Heart right ventricle (tissue), 16 donors: ENCODE measurements at regions of chr1 and their contacts with region 1.

Region 1: DNA sequence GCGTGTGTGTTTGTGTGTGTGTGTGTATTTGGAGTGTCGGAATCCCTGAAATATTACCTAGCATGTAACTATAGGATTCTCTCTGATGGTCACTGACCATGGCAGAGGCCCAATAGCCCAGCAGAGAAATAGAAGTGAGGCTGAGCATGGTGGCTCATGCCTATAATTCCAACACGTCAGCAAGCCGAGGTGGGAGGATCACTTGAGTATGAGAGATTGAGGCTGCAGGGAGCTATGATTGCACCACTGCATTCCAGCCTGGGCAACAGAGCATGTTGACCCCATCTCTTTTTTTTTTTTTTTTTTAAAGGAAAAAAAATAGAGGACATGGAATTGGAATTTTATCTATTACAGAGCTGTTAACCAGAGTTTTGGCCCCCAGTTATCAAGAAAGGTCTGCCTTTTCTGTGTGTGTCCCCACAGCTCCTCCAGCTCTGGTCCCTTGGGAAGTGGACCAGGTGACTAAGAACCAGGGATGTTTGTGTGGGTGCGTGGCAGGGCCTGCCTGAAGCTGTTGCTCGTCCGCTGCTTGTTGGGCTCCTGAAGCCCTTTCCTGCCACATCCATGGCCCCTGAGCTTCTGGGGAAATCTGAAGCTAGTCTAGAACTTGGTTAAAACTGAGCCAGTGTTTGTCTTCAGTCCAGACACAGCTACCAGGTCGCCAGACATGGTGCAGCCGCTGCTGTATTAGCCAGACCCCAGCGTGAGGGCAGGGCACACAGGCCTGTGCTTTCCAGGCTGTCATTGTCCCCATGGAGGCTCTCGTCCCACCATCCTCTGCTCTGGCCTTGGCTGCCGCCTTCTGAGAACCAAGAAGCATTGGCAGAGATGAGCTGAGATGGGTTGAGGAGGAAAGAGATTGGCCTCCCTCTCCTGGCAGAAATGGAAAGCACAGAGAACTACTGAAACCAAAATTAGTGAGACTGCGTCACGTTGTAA is 25.5 kb downstream of the CAPN9 start:
- DNase-seq: peak; percentile 52 to 76
- ATAC-seq: peak; percentile 81 to 91 (median 86)
- H3K4me3 ChIP-seq: peak overlapping the region in 2 of 10 donors; percentile 13 to 16
- H3K27ac ChIP-seq: peak overlapping the region in 5 of 10 donors; percentile 7 to 67 (median 52)
- H3K4me1 ChIP-seq: peaks cover 0 to 21% (median 7%) of the 10 kb centered on the region in 9 donors
- H3K27me3 ChIP-seq: peaks cover 0 to 7% (median 0%) of the 10 kb centered on the region in 7 donors
- CTCF ChIP-seq: peak; percentile 43 to 79 (median 58)

Region 2: GRCh38 chr1:230632273-230632873 is 140.4 kb before region 1 on chr1:
- intact Hi-C with region 1: loop called in 3 of 10 experiments (anchors 2 to 10 kb)
- DNase-seq: no peak
- ATAC-seq: peak in 4 of 8 donors; percentile 16 to 70 (median 53)
- H3K4me3 ChIP-seq: no peak overlapping the region
- H3K27ac ChIP-seq: no peak overlapping the region
- H3K4me1 ChIP-seq: no peaks in the 10 kb centered on the region
- H3K27me3 ChIP-seq: peaks cover 0 to 12% (median 0%) of the 10 kb centered on the region in 7 donors
- CTCF ChIP-seq: peak; percentile 7 to 54 (median 41)

Region 3: DNA sequence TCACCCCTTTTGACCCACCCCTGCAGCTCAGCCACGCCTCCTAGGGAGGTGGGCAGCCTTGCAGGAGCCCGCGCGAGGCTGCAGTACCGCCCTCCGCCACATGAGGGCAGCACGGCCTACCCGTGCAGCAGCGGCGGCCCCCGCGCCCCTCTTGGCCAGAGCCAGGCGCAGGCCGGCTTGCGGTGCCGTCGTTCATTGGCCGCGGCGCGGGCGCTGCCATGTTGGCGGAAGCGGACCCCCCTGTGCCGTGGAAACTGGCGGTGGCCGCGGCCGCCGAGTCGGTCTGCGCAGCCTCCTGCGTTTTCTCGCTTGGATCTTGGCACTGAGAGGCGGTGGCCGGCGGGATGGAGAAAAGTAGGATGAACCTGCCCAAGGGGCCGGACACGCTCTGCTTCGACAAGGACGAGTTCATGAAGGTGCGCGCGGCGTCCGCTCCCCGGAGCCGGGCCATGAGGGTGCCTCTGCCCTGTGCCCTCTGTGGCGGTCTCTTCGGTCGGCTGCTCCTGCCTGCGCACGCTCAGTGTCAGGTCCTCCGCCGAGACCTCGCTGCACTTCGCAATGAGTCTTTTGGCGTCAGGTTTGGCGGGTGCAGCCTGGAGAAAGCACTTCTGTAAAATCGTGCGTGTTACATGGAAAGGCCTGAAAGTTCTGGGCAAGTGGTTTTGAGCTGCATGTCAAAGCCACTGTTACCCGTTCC is 130.3 kb before region 1 on chr1 and contains the start of gene COG2:
- intact Hi-C with region 1: loop called in 6 of 10 experiments (anchors 1 to 10 kb)
- DNase-seq: peak; percentile 92 to 97
- ATAC-seq: peak; percentile 98 to 100 (median 99)
- H3K4me3 ChIP-seq: peak within 1 kb of the TSS; percentile 44 to 93 (median 78)
- H3K27ac ChIP-seq: peak within 1 kb of the TSS in 9 of 10 donors; percentile 56 to 94 (median 84)
- H3K4me1 ChIP-seq: peaks cover 9 to 51% (median 34%) of the 10 kb centered on the region in 9 donors
- H3K27me3 ChIP-seq: peaks cover 0 to 9% (median 0%) of the 10 kb centered on the region in 7 donors
- CTCF ChIP-seq: peak; percentile 100
- total RNA-seq, gene COG2: 20.1 to 36.5 (median 24.7) TPM

Region 4: GRCh38 chr1:230679192-230679591 is 93.5 kb before region 1 on chr1:
- intact Hi-C with region 1: loop called in 1 of 10 experiments (anchors 10 kb)
- DNase-seq: no peak
- ATAC-seq: peak in 2 of 8 donors; percentile 29 to 35
- H3K4me3 ChIP-seq: no peak overlapping the region
- H3K27ac ChIP-seq: peak overlapping the region in 2 of 10 donors; percentile 19 to 26
- H3K4me1 ChIP-seq: peaks cover 11 to 28% (median 19%) of the 10 kb centered on the region in 9 donors
- H3K27me3 ChIP-seq: no peaks in the 10 kb centered on the region
- CTCF ChIP-seq: no peak

Region 5: DNA sequence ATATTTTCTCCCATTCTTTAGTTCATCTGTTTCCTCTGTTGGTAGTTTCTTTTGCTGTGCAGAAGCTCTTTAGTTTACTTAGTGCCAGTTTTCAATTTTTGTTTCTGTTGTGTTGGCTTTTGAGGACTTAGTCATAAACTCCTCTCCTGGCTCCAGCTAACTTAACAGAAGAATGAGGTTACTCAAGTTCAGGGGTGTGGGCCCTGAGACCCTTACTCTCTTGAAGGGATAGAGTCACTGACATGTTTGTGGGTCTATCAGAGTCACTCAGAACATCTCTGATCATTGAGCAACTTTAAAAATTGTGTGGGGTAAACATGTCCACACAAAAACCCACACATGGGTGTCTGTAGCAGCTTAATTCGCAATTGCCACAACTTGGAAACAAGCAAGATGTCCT is 73.0 kb before region 1 on chr1:
- intact Hi-C with region 1: loop called in 1 of 10 experiments (anchors 1 kb)
- DNase-seq: no peak
- ATAC-seq: no peak
- H3K4me3 ChIP-seq: no peak overlapping the region
- H3K27ac ChIP-seq: no peak overlapping the region
- H3K4me1 ChIP-seq: peaks cover 0 to 16% (median 0%) of the 10 kb centered on the region in 9 donors
- H3K27me3 ChIP-seq: no peaks in the 10 kb centered on the region
- CTCF ChIP-seq: no peak

Region 6: GRCh38 chr1:230713915-230714764 is 58.6 kb before region 1 on chr1 and contains the start of gene AGT:
- intact Hi-C with region 1: loop called in 3 of 10 experiments (anchors 5 kb)
- DNase-seq: peak; percentile 80 to 84
- ATAC-seq: peak; percentile 89 to 98 (median 95)
- H3K4me3 ChIP-seq: peak within 1 kb of the TSS in 9 of 10 donors; percentile 26 to 63 (median 55)
- H3K27ac ChIP-seq: peak within 1 kb of the TSS; percentile 66 to 89 (median 76)
- H3K4me1 ChIP-seq: peaks cover 0 to 55% (median 13%) of the 10 kb centered on the region in 9 donors
- H3K27me3 ChIP-seq: no peaks in the 10 kb centered on the region
- CTCF ChIP-seq: no peak
- total RNA-seq, gene AGT: 44.2 to 87.5 (median 63.3) TPM

Region 7: GRCh38 chr1:231072041-231072440 is 299.3 kb after region 1 on chr1:
- intact Hi-C with region 1: no loop called
- DNase-seq: peak in 1 of 2 donors; percentile 12
- ATAC-seq: peak in 7 of 8 donors; percentile 43 to 84 (median 58)
- H3K4me3 ChIP-seq: no peak overlapping the region
- H3K27ac ChIP-seq: peak overlapping the region in 4 of 10 donors; percentile 17 to 64 (median 24)
- H3K4me1 ChIP-seq: peaks cover 0 to 32% (median 15%) of the 10 kb centered on the region in 9 donors
- H3K27me3 ChIP-seq: no peaks in the 10 kb centered on the region
- CTCF ChIP-seq: no peak